ENCODE measurements at regions of chr5 and their contacts with region 1.

Region 1: DNA sequence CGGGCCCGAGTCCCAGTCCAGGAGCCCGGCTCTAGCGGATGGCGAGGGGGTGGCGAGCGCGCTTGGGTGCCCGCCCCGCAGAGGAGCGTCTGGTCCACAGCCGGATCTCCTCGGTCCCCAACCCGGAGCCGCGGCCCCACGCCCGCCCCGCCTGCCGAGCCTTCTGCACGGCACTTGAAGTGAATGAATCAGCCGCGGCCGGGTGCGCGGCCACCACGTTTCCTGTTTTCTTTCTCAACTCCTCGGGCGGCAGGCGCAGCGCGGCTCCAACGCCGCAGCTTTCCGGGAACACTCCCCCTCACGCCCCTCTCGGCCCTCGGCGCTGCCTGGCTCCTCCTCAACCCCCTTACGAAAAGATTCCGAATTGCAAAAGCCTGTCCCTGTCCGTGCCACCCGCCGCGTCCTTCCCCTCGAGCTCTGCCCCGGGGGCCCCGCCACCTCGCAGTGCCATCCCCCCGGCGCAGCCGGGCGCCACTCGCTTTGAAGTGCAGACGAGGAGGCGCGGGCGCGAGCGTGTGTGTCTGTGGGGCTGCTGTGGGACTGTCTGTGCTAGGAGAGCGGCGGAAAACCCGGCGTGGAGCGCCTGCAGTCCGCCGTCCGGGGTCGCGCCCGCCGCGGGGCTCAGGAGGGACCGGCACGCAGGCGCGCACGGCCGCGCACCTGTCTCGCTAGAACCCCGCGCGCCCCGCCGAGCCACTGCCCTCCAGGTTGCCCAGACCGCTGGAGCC is 456.6 kb downstream of the RAB3C start:
- DNase-seq: no peak
- ATAC-seq: peak; percentile 79
- H3K4me3 ChIP-seq: peak overlapping the region; percentile 46 to 56
- H3K27ac ChIP-seq: no peak overlapping the region
- H3K4me1 ChIP-seq: no peaks in the 10 kb centered on the region; the same call in 1 of the 2 replicates
- H3K27me3 ChIP-seq: peaks cover 35% of the 10 kb centered on the region
- CTCF ChIP-seq: no peak

Region 2: DNA sequence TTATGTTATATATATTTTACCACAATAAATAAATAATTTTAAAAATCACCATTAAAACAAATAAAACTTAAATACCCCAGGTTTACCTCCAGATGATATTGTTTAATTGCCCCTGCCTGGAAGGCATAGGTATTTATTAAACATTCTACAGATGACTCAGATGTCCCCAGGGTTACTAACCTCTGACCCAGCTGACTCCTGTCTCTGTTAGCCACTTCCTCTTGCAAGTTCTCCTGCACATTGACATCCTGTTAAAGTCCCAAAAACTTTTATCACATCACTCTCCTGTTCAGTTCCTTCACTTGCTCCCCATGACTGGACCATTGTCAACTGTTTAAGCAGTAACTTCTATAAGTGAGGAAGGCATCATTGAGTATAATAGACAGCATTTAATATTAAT is 493.5 kb before region 1 on chr5:
- CTCF ChIA-PET with region 1: no interaction called
- POLR2A ChIA-PET with region 1: no interaction called
- in situ Hi-C with region 1: no loop called
- intact Hi-C with region 1: no loop called
- DNase-seq: no peak
- ATAC-seq: no peak
- H3K4me3 ChIP-seq: no peak overlapping the region
- H3K27ac ChIP-seq: no peak overlapping the region
- H3K4me1 ChIP-seq: no peaks in the 10 kb centered on the region
- H3K27me3 ChIP-seq: no peaks in the 10 kb centered on the region
- CTCF ChIP-seq: no peak

Region 3: GRCh38 chr5:58972301-58972700 is 67.2 kb before region 1 on chr5:
- CTCF ChIA-PET with region 1: no interaction called
- POLR2A ChIA-PET with region 1: no interaction called
- in situ Hi-C with region 1: no loop called
- intact Hi-C with region 1: no loop called
- DNase-seq: no peak
- ATAC-seq: no peak
- H3K4me3 ChIP-seq: no peak overlapping the region
- H3K27ac ChIP-seq: no peak overlapping the region
- H3K4me1 ChIP-seq: no peaks in the 10 kb centered on the region
- H3K27me3 ChIP-seq: no peaks in the 10 kb centered on the region; the same call in 1 of the 2 replicates
- CTCF ChIP-seq: no peak

Region 4: GRCh38 chr5:59061377-59061776 is 21.9 kb after region 1 on chr5:
- CTCF ChIA-PET with region 1: interaction called, 12 read pairs
- POLR2A ChIA-PET with region 1: no interaction called
- in situ Hi-C with region 1: no loop called
- intact Hi-C with region 1: no loop called
- DNase-seq: no peak
- ATAC-seq: no peak
- H3K4me3 ChIP-seq: no peak overlapping the region
- H3K27ac ChIP-seq: no peak overlapping the region
- H3K4me1 ChIP-seq: no peaks in the 10 kb centered on the region
- H3K27me3 ChIP-seq: no peaks in the 10 kb centered on the region; the same call in 1 of the 2 replicates
- CTCF ChIP-seq: no peak

Region 5: GRCh38 chr5:59071755-59072549 is 32.5 kb after region 1 on chr5:
- CTCF ChIA-PET with region 1: no interaction called
- POLR2A ChIA-PET with region 1: no interaction called
- in situ Hi-C with region 1: no loop called
- intact Hi-C with region 1: no loop called
- DNase-seq: no peak
- ATAC-seq: no peak
- H3K4me3 ChIP-seq: no peak overlapping the region
- H3K27ac ChIP-seq: no peak overlapping the region
- H3K4me1 ChIP-seq: no peaks in the 10 kb centered on the region
- H3K27me3 ChIP-seq: no peaks in the 10 kb centered on the region
- CTCF ChIP-seq: no peak

Region 6: GRCh38 chr5:59174248-59174844 is 134.9 kb after region 1 on chr5:
- CTCF ChIA-PET with region 1: no interaction called
- POLR2A ChIA-PET with region 1: no interaction called
- in situ Hi-C with region 1: no loop called
- intact Hi-C with region 1: loop called (anchors 10 kb)
- DNase-seq: no peak
- ATAC-seq: peak; percentile 90
- H3K4me3 ChIP-seq: no peak overlapping the region
- H3K27ac ChIP-seq: no peak overlapping the region
- H3K4me1 ChIP-seq: no peaks in the 10 kb centered on the region
- H3K27me3 ChIP-seq: no peaks in the 10 kb centered on the region
- CTCF ChIP-seq: peak; percentile 75; the same call in 1 of the 2 replicates

Region 7: DNA sequence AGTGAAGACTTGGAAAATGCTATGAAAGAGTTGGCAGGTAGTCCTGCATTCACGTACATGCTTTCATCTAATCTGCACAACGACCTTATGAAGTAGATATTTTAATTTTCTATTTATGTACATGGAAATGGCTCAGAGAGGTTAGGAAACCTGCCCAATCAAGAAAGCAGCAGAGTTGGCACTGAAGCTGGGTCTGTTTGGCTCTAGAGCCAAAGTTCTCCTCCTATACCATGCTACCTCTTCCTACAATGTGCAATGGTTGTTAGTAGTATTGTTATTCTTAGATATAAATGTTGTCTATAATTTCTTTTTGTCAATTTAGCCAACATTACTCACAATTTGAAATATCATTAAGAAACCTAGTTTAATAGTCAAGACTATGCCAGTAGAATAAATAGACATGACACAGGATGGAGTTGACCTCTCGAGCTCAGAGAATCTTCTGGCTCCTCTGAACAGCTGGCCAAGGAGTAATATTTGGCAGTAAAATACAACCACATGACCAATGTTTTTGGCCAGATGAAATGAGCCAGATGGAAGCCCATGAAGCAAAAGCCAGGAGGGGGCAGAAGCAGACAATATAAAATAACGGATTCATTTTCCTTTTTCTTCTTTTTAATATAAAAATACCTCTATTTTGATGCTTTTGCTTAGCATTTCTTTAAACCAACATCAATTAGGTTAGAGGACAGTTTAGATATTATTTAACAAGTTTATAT is 311.8 kb after region 1 on chr5:
- CTCF ChIA-PET with region 1: no interaction called
- POLR2A ChIA-PET with region 1: no interaction called
- in situ Hi-C with region 1: no loop called
- intact Hi-C with region 1: no loop called
- DNase-seq: no peak
- ATAC-seq: no peak
- H3K4me3 ChIP-seq: no peak overlapping the region
- H3K27ac ChIP-seq: no peak overlapping the region
- H3K4me1 ChIP-seq: no peaks in the 10 kb centered on the region
- H3K27me3 ChIP-seq: no peaks in the 10 kb centered on the region
- CTCF ChIP-seq: no peak